ENCODE measurements at regions of chr9 and their contacts with region 1.

Region 1: GRCh38 chr9:124771021-124771866 is at the start of gene NR6A1:
- DNase-seq: peak; percentile 86 to 98
- H3K4me3 ChIP-seq: peak within 1 kb of the TSS; percentile 77
- H3K27ac ChIP-seq: peak within 1 kb of the TSS; percentile 74
- H3K4me1 ChIP-seq: peaks cover 25% of the 10 kb centered on the region
- H3K27me3 ChIP-seq: 0 out of 2 replicates have a peak, but pooled peaks cover under 1% of the 10 kb centered on the region
- CTCF ChIP-seq: no peak
- total RNA-seq, gene NR6A1: 13.0 TPM in 2 replicates

Region 2: GRCh38 chr9:124551472-124552272 is 219.6 kb before region 1 on chr9:
- CTCF ChIA-PET with region 1: interaction called, 5 read pairs
- POLR2A ChIA-PET with region 1: no interaction called
- intact Hi-C with region 1: loop called (anchors 1 kb)
- DNase-seq: peak; percentile 71 to 78
- H3K4me3 ChIP-seq: no peak overlapping the region
- H3K27ac ChIP-seq: peak overlapping the region; percentile 45
- H3K4me1 ChIP-seq: peaks cover 23% of the 10 kb centered on the region
- H3K27me3 ChIP-seq: no peaks in the 10 kb centered on the region
- CTCF ChIP-seq: peak; percentile 78

Region 3: DNA sequence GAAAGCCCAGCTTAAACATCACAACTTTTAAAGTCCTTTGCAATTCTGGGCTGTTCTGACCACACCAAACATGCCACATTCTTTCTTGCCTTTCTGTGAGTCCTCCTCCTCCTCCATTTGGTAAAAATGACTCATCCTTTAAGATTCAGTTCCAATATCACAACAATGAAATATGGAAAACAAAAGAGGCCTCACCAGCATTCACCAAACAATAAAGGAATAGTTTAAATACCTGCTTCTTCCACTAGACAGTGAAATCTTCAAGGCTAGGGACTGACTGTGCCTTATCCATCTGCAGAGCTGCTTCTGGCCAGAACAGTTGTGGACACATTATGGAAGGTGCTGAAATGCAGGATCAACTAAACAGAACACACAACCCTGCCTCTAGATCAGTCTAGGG is 36.1 kb before region 1 on chr9:
- CTCF ChIA-PET with region 1: interaction called, 7 read pairs
- POLR2A ChIA-PET with region 1: no interaction called
- intact Hi-C with region 1: loop called (anchors 2 kb)
- DNase-seq: peak; percentile 45 to 89
- H3K4me3 ChIP-seq: no peak overlapping the region
- H3K27ac ChIP-seq: peak overlapping the region; percentile 80
- H3K4me1 ChIP-seq: peaks cover 34% of the 10 kb centered on the region
- H3K27me3 ChIP-seq: no peaks in the 10 kb centered on the region
- CTCF ChIP-seq: no peak

Region 4: GRCh38 chr9:124834591-124834990 is 63.3 kb after region 1 on chr9:
- CTCF ChIA-PET with region 1: interaction called, 3 read pairs
- POLR2A ChIA-PET with region 1: interaction called, 11 read pairs
- intact Hi-C with region 1: no loop called
- DNase-seq: peak; percentile 71 to 89
- H3K4me3 ChIP-seq: no peak overlapping the region; the same call in 1 of the 2 replicates
- H3K27ac ChIP-seq: peak overlapping the region; percentile 59
- H3K4me1 ChIP-seq: peaks cover 20% of the 10 kb centered on the region
- H3K27me3 ChIP-seq: no peaks in the 10 kb centered on the region
- CTCF ChIP-seq: no peak

Region 5: DNA sequence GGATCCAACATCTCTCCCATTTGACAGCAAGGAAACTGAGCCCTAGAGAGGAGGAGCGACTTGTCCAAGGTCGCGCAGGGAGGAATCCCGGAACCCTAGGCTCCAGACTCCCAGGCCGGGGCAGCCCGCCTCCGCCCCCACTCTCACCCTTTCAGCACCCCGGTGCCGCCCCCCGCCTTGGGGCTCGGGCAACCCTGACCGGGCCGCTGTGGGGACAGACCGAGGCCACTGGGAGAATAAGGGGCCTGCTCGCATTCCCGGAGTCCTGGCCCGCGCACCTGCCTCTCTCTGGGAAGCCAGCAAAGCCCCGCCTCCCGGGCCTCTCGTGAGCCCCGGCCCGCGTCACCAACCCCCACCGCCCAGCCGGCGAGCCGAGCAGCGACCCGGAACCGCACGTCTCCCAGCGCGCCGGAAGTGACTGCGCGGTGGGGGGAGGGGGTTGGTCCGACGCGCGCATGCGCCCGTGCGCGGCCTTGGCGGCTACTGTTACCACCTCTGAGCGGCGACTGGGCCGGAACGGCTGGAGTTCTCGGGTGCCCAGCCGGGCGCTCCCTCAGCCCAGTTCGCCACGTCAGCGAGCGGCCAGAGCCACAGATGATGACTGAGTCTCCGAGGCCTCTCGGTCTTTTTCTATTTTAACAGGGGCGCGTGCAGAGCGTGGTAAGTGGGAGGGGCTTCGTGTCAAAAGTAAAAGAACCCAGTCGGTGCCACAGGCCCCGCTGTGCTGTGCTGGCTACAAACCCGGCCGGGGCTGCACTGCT is 169.6 kb after region 1 on chr9 and contains the start of gene GOLGA1:
- CTCF ChIA-PET with region 1: interaction called, 3 read pairs
- POLR2A ChIA-PET with region 1: no interaction called
- intact Hi-C with region 1: loop called (anchors 2 kb)
- DNase-seq: peak; percentile 82 to 98
- H3K4me3 ChIP-seq: peak within 1 kb of the TSS; percentile 71
- H3K27ac ChIP-seq: peak within 1 kb of the TSS; percentile 83
- H3K4me1 ChIP-seq: peaks cover 19% of the 10 kb centered on the region
- H3K27me3 ChIP-seq: no peaks in the 10 kb centered on the region
- CTCF ChIP-seq: no peak
- total RNA-seq, gene GOLGA1: 23.0 and 26.2 TPM in 2 replicates

Region 6: DNA sequence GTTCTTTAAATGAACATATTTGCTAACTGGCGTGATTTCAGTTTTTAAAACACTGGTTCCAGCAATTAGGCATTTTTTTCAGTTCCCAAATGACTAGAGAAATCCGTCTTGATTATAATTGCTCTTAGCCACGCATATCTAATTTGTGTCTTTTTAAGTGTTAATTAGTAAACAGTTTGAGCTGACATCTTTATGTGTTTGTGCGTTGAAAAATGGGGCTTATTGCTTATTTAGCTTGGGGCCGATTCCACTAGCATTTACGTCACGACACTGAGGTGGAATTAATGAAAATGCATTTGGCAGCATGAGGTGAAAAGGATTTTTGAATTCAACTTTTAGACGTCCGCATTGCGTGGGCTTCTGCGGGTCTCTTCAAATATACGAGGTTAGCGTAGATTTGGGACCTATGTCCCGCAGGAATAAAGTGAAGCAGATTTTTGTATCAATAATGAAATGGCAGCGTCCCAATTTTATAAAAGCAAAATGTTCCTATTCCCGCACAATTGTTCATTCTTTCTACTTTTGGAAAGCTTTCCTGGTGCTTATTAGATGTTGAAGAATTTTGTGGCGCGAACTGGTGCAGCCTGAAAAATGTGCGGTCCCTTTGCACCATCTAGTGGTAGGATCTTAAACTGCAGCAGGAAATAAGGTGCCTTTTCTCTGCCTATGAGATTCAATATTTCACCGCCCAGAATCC is 1719.8 kb after region 1 on chr9:
- CTCF ChIA-PET with region 1: no interaction called
- POLR2A ChIA-PET with region 1: no interaction called
- intact Hi-C with region 1: loop called (anchors 5 kb)
- DNase-seq: peak; percentile 50 to 53
- H3K4me3 ChIP-seq: no peak overlapping the region
- H3K27ac ChIP-seq: no peak overlapping the region
- H3K4me1 ChIP-seq: no peaks in the 10 kb centered on the region
- H3K27me3 ChIP-seq: no peaks in the 10 kb centered on the region
- CTCF ChIP-seq: peak; percentile 95